Right ventricle myocardium superior (tissue), 1 donor: ENCODE measurements at regions of chr3 and their contacts with region 1.

Region 1: GRCh38 chr3:177190756-177191681 is 6.3 kb downstream of the TBL1XR1 start:
- DNase-seq: no peak
- ATAC-seq: no peak

Region 2: DNA sequence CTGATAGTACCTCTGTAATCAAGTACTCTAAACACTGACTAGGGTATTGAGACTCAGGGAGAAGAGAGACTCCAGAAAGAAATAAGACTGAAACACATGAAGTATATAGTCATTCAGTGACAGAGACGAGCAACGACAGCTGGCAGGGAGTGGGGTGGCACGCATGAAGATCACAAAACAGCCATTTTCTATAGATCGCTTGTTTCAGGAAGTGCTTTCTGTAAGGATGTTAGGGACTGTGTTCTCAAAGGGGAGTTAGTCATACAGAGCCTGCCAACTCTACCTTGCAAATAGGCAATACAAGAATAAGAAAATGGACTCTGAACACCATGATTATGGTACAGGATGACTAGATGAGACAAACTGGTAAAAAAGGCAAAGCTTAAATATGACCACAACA is 133.3 kb before region 1 on chr3:
- intact Hi-C with region 1: loop called (anchors 5 kb)
- DNase-seq: no peak
- ATAC-seq: no peak